ENCODE measurements at regions of chr6 and their contacts with region 1.

Region 1: DNA sequence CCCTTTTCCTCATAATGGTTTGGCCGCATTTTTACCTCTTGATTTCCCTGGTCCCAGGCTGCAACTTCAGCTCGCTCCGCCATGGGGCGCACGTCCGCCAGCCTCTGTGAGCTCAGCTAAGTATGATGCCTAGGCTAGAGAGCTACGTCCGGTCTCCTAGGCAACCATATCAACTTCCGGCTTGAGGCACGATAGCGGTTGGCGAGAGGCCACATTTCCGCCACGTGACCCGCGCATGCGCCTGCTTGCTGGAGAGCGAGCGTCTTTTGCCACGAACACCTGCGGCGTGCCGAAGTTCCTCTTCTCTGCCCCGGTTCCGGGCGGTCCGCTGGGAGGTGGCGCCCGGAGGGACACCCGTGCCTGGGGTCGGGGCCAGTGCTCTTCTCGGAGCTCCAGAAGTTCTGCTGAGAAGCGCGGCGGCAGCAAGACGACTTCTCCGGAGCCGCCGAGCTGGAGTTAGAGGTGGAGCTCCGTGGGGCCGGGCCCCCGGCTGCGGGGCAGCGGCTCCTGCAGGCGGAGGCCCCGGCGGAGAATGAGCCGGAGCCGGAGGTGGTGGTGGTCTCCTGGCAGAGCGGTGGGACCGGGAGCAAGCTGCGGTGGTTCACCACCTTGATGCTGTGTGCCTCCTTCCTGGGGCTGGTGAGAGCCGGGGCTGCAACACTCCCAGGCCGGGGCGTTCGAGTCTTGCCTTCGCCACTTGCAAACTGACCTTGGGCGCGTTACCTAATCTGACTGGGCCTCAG is 172.0 kb downstream of the SLC16A10 start:
- DNase-seq: peak; percentile 97
- ATAC-seq: peak; percentile 93
- H3K4me3 Mint-ChIP-seq: peak overlapping the region; percentile 84
- H3K27ac Mint-ChIP-seq: peak overlapping the region; percentile 87
- H3K4me1 Mint-ChIP-seq: peaks cover 30% of the 10 kb centered on the region
- H3K27me3 Mint-ChIP-seq: no peaks in the 10 kb centered on the region
- CTCF ChIP-seq: peak; percentile 89

Region 2: DNA sequence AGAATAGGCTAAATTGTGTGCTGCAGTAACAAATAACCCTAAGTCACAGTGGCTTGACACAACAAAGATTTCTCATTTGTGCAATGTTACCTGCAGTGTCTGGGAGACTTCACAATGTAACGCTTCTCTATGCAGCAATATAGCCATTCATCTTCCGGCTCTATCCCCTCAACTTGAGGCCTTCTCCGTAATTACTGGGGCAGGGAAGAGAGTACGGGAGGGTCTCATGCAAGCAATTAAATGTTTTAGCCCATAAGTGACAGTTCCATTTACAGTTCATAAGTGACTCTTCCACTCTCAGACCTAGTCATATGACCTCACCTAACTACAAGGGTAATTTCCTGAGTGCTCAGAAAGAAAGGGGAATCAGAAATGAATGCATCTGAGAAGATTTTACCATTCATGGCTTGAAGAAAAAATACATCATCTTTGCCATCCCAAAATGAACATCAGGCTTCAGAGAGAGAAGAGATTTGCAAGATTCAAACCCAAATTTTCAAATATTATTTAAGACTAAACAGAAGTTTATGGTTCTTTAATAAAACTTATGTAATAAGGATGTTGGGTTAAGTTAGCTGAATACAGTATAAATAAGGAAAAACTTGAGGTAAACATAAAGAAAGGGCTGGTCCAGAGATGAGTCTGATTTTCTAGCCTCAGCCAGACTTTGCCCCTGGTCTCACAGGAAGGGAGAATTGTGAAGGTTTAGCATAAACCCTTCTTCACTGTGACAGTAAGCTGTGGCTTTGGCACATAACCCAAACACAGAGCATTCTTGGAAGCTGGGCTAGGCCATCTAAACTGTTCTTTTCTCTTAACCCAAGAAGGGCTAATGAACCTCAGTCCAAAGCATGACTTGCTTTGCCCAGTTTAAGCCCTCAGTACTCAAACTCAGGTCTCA is 1267.8 kb before region 1 on chr6:
- CTCF ChIA-PET with region 1: no interaction called
- POLR2A ChIA-PET with region 1: no interaction called
- intact Hi-C with region 1: no loop called
- DNase-seq: no peak
- ATAC-seq: no peak
- H3K4me3 Mint-ChIP-seq: no peak overlapping the region
- H3K27ac Mint-ChIP-seq: no peak overlapping the region
- H3K4me1 Mint-ChIP-seq: no peaks in the 10 kb centered on the region
- H3K27me3 Mint-ChIP-seq: peaks cover 20% of the 10 kb centered on the region
- CTCF ChIP-seq: no peak

Region 3: GRCh38 chr6:110708295-110708950 is 550.8 kb before region 1 on chr6:
- CTCF ChIA-PET with region 1: no interaction called
- POLR2A ChIA-PET with region 1: no interaction called
- intact Hi-C with region 1: no loop called
- DNase-seq: no peak
- ATAC-seq: no peak
- H3K4me3 Mint-ChIP-seq: no peak overlapping the region
- H3K27ac Mint-ChIP-seq: no peak overlapping the region
- H3K4me1 Mint-ChIP-seq: peaks cover 7% of the 10 kb centered on the region
- H3K27me3 Mint-ChIP-seq: no peaks in the 10 kb centered on the region
- CTCF ChIP-seq: no peak

Region 4: GRCh38 chr6:111406200-111406721 is 147.0 kb after region 1 on chr6:
- CTCF ChIA-PET with region 1: interaction called, 3 read pairs
- POLR2A ChIA-PET with region 1: no interaction called
- intact Hi-C with region 1: loop called (anchors 1 kb)
- DNase-seq: no peak
- ATAC-seq: peak; percentile 96
- H3K4me3 Mint-ChIP-seq: peak overlapping the region; percentile 47
- H3K27ac Mint-ChIP-seq: peak overlapping the region; percentile 90
- H3K4me1 Mint-ChIP-seq: peaks cover 36% of the 10 kb centered on the region
- H3K27me3 Mint-ChIP-seq: no peaks in the 10 kb centered on the region
- CTCF ChIP-seq: no peak

Region 5: GRCh38 chr6:111565326-111566221 is 306.3 kb after region 1 on chr6:
- CTCF ChIA-PET with region 1: interaction called, 14 read pairs
- POLR2A ChIA-PET with region 1: interaction called, 8 read pairs
- intact Hi-C with region 1: loop called (anchors 1 kb)
- DNase-seq: no peak
- ATAC-seq: peak; percentile 85
- H3K4me3 Mint-ChIP-seq: no peak overlapping the region
- H3K27ac Mint-ChIP-seq: peak overlapping the region; percentile 80
- H3K4me1 Mint-ChIP-seq: peaks cover 23% of the 10 kb centered on the region
- H3K27me3 Mint-ChIP-seq: no peaks in the 10 kb centered on the region
- CTCF ChIP-seq: no peak

Region 6: DNA sequence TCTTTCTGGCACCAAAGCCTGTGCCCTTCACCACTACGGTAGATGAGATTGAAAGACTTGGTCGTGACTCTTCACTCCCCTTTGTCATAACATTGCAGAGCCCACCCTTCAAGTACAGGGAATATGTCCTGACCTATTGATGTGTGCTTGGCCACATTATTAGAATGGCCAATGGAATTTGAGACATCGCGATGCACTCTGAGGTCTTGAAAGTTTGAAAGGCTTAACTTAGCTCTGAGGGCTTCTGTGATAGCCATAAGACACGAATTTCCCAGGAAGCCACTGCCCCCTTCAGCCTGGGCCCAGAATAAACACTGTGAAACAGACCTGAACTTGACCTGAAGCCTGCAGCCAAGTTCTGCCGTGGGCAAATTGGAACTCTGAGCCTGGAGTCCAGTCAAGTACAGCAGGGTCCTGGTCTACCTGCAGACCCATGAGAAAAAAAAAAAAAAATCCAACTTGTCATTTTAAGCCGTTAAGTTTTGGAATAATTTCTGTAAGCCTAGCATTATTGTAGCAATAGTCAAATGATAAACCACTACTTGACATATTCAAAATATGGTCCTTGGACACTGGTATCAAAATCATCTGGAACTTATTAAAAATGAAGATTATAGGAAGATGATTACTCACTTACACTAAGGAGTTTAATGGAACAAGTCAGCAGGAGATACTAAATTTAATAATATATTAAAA is 383.4 kb after region 1 on chr6:
- CTCF ChIA-PET with region 1: interaction called, 10 read pairs
- POLR2A ChIA-PET with region 1: interaction called, 3 read pairs
- intact Hi-C with region 1: loop called (anchors 1 kb)
- DNase-seq: no peak
- ATAC-seq: peak; percentile 69
- H3K4me3 Mint-ChIP-seq: no peak overlapping the region
- H3K27ac Mint-ChIP-seq: no peak overlapping the region
- H3K4me1 Mint-ChIP-seq: no peaks in the 10 kb centered on the region
- H3K27me3 Mint-ChIP-seq: no peaks in the 10 kb centered on the region
- CTCF ChIP-seq: no peak

Region 7: GRCh38 chr6:112087136-112087911 is 828.1 kb after region 1 on chr6 and contains the starts of genes FAM229B and TUBE1:
- CTCF ChIA-PET with region 1: no interaction called
- POLR2A ChIA-PET with region 1: interaction called, 5 read pairs
- intact Hi-C with region 1: loop called (anchors 1 kb)
- DNase-seq: peak; percentile 74
- ATAC-seq: peak; percentile 96
- H3K4me3 Mint-ChIP-seq: no peak within 1 kb of the TSS
- H3K27ac Mint-ChIP-seq: no peak within 1 kb of the TSS
- H3K4me1 Mint-ChIP-seq: no peaks in the 10 kb centered on the region
- H3K27me3 Mint-ChIP-seq: peaks cover 14% of the 10 kb centered on the region
- CTCF ChIP-seq: no peak
- total RNA-seq, gene FAM229B: 2.0 and 2.6 TPM in 2 replicates
- total RNA-seq, gene TUBE1: 24.1 and 28.0 TPM in 2 replicates